ENCODE measurements at regions of chr9 and their contacts with region 1.

Region 1: DNA sequence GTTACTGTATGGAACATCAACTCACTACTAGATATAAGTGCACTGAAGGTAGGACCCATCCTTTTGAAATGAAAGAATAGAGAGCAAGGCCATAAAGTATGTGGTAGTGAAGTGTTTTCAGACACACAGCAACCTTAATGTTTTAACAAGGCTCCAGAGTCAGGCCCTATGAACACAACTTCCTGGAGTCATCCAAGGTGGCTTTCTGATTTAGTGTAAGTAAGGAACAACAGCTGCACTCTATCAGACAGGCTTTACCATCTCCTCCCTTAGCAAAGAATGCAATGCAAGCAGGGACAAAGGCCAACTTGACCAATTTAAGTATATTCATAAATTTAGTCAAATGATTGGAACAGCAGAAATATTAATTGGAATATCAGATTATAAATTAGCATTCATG is 90.1 kb downstream of the MPDZ start:
- DNase-seq: no peak
- ATAC-seq: no peak
- H3K4me3 ChIP-seq: no peak overlapping the region
- H3K27ac ChIP-seq: no peak overlapping the region
- H3K4me1 ChIP-seq: no peaks in the 10 kb centered on the region
- H3K27me3 ChIP-seq: no peaks in the 10 kb centered on the region
- CTCF ChIP-seq: no peak
- POLR2A ChIP-seq: no peak

Region 2: DNA sequence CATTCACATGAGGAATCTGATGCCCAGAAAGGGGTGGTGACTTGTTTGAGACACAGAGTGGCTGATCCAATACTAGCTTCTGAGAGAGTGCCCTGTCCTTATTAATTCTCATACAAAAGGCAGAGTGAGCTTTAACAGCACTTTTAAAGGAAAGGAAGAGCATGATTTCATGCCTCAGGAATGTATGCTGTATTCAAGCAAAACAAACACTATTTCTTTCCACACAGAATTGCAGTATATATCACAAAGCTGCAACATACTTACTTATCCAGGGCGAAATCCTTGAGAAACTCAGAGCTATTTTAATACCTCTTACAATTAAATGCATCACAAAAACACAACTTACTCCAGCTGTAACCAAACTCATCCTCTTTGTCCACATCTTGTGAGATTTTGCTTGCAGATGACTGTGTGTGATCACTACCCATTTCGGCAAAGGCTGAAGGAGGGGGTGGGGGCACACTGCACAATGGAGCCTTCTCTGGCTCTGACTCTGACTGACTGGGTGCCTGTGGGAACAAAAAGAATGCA is 49.7 kb before region 1 on chr9:
- intact Hi-C with region 1: loop called in 1 of 10 experiments (anchors 5 kb)
- DNase-seq: no peak
- ATAC-seq: peak in 1 of 4 donors; percentile 52
- H3K4me3 ChIP-seq: no peak overlapping the region
- H3K27ac ChIP-seq: peak overlapping the region in 1 of 12 donors; percentile 5
- H3K4me1 ChIP-seq: peaks cover 0 to 26% (median 5%) of the 10 kb centered on the region in 12 donors
- H3K27me3 ChIP-seq: no peaks in the 10 kb centered on the region
- CTCF ChIP-seq: no peak
- POLR2A ChIP-seq: no peak

Region 3: GRCh38 chr9:13364271-13365000 is 175.1 kb after region 1 on chr9:
- intact Hi-C with region 1: no loop called
- DNase-seq: no peak
- ATAC-seq: no peak
- H3K4me3 ChIP-seq: no peak overlapping the region
- H3K27ac ChIP-seq: no peak overlapping the region
- H3K4me1 ChIP-seq: peaks cover 0 to 15% (median 0%) of the 10 kb centered on the region in 12 donors
- H3K27me3 ChIP-seq: no peaks in the 10 kb centered on the region
- CTCF ChIP-seq: no peak
- POLR2A ChIP-seq: no peak